Dorsolateral prefrontal cortex (tissue), 120 donors: ENCODE measurements at regions of chr1 and their contacts with region 1.

Region 1: DNA sequence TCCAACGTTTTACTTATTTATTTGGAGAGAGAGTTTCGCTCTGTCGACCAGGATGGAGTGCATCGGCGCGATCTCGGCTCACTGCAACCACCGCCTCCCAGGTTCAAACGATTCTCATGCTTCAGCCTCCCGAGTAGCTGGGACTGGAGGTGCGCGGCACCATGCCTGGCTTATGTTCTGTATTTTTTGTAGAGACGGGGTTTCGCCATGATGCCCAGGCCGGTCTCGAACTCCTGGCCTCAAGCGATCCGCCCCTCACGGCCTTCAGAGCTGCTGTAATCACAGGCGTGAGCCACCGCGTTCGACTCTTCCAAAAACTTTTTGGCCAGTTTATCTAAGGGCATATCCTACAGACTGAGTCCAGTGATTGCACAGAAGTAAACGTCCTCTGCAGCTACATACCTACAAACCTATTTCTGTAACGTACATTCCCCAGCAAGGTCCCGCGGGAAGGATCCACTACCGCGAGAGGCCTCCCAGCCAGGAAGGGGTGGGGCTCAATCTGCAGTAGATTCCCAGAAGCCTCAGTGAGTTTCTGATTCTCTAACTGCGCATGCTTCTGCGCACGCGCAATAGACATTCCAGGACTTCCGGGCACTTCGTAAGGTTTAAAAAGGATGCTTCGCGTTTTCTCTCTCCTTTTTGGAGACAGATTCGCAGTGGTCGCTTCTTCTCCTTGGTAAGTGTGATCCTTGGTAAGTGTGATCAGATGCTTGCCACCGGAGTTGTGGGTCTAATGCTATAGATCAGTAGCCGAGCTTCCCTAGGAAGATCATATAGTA is at the start of gene RCC1:
- DNase-seq: peak; percentile 86 to 96 (median 93)
- H3K4me3 ChIP-seq: peak within 1 kb of the TSS; percentile 61 to 98 (median 85)
- H3K27ac ChIP-seq: peak within 1 kb of the TSS; percentile 40 to 96 (median 87)
- H3K27me3 ChIP-seq: no peaks in the 10 kb centered on the region
- CTCF ChIP-seq: peak in 36 of 56 donors; percentile 2 to 58 (median 34)
- total RNA-seq, gene RCC1: 3.3 to 22.5 (median 7.0) TPM

Region 2: GRCh38 chr1:28123461-28123961 is 382.1 kb before region 1 on chr1:
- intact Hi-C with region 1: no loop called
- DNase-seq: peak in 1 of 10 donors; percentile 13
- H3K4me3 ChIP-seq: peak overlapping the region in 14 of 59 donors; percentile 2 to 47 (median 22)
- H3K27ac ChIP-seq: peak overlapping the region in 26 of 59 donors; percentile 4 to 67 (median 42)
- H3K27me3 ChIP-seq: no peaks in the 10 kb centered on the region
- CTCF ChIP-seq: no peak

Region 3: GRCh38 chr1:28248283-28249012 is 257.1 kb before region 1 on chr1:
- intact Hi-C with region 1: loop called (anchors 5 to 10 kb)
- DNase-seq: peak; percentile 69 to 89 (median 78)
- H3K4me3 ChIP-seq: peak overlapping the region in 51 of 59 donors; percentile 7 to 82 (median 33)
- H3K27ac ChIP-seq: peak overlapping the region; percentile 6 to 96 (median 85)
- H3K27me3 ChIP-seq: no peaks in the 10 kb centered on the region
- CTCF ChIP-seq: peak; percentile 83 to 97 (median 94)

Region 4: GRCh38 chr1:28259307-28260167 is 246.1 kb before region 1 on chr1 and contains the start of gene SESN2:
- intact Hi-C with region 1: loop called in 1 of 2 experiments (anchors 10 kb)
- DNase-seq: peak; percentile 99 to 100 (median 99)
- H3K4me3 ChIP-seq: peak within 1 kb of the TSS; percentile 68 to 100 (median 95)
- H3K27ac ChIP-seq: peak within 1 kb of the TSS in 55 of 59 donors; percentile 41 to 94 (median 82)
- H3K27me3 ChIP-seq: no peaks in the 10 kb centered on the region
- CTCF ChIP-seq: peak in 35 of 56 donors; percentile 10 to 64 (median 31)
- total RNA-seq, gene SESN2: 6.5 to 26.1 (median 11.8) TPM

Region 5: GRCh38 chr1:28329395-28330153 is 176.0 kb before region 1 on chr1:
- intact Hi-C with region 1: loop called in 1 of 2 experiments (anchors 5 kb)
- DNase-seq: peak in 3 of 10 donors; percentile 10 to 44 (median 32)
- H3K4me3 ChIP-seq: peak overlapping the region; percentile 53 to 91 (median 76)
- H3K27ac ChIP-seq: peak overlapping the region; percentile 17 to 94 (median 88)
- H3K27me3 ChIP-seq: no peaks in the 10 kb centered on the region
- CTCF ChIP-seq: no peak

Region 6: GRCh38 chr1:28552758-28553663 is 47.4 kb after region 1 on chr1 and contains the start of gene TRNAU1AP:
- intact Hi-C with region 1: loop called (anchors 2 kb)
- DNase-seq: peak; percentile 85 to 95 (median 92)
- H3K4me3 ChIP-seq: peak within 1 kb of the TSS; percentile 68 to 98 (median 91)
- H3K27ac ChIP-seq: peak within 1 kb of the TSS; percentile 56 to 98 (median 91)
- H3K27me3 ChIP-seq: no peaks in the 10 kb centered on the region
- CTCF ChIP-seq: peak in 34 of 56 donors; percentile 4 to 60 (median 30)
- total RNA-seq, gene TRNAU1AP: 20.5 to 49.2 (median 32.7) TPM